Endothelial cell of umbilical vein (primary cell): ENCODE measurements at regions of chr6 and their contacts with region 1.

Region 1: GRCh38 chr6:164106345-164106769 is 691.8 kb downstream of the QKI start:
- DNase-seq: peak; percentile 31
- H3K4me3 ChIP-seq: no peak overlapping the region
- H3K27ac ChIP-seq: no peak overlapping the region
- H3K4me1 ChIP-seq: peaks cover 9% of the 10 kb centered on the region
- H3K27me3 ChIP-seq: no peaks in the 10 kb centered on the region
- CTCF ChIP-seq: peak; percentile 48 to 66
- POLR2A ChIP-seq: no peak

Region 2: GRCh38 chr6:162856885-162857284 is 1249.5 kb before region 1 on chr6:
- CTCF ChIA-PET with region 1: no interaction called
- POLR2A ChIA-PET with region 1: no interaction called
- dilution Hi-C with region 1: no loop called
- intact Hi-C with region 1: loop called (anchors 5 kb)
- DNase-seq: peak; percentile 69
- H3K4me3 ChIP-seq: no peak overlapping the region
- H3K27ac ChIP-seq: no peak overlapping the region
- H3K4me1 ChIP-seq: no peaks in the 10 kb centered on the region
- H3K27me3 ChIP-seq: no peaks in the 10 kb centered on the region
- CTCF ChIP-seq: peak; percentile 19 to 45
- POLR2A ChIP-seq: no peak

Region 3: DNA sequence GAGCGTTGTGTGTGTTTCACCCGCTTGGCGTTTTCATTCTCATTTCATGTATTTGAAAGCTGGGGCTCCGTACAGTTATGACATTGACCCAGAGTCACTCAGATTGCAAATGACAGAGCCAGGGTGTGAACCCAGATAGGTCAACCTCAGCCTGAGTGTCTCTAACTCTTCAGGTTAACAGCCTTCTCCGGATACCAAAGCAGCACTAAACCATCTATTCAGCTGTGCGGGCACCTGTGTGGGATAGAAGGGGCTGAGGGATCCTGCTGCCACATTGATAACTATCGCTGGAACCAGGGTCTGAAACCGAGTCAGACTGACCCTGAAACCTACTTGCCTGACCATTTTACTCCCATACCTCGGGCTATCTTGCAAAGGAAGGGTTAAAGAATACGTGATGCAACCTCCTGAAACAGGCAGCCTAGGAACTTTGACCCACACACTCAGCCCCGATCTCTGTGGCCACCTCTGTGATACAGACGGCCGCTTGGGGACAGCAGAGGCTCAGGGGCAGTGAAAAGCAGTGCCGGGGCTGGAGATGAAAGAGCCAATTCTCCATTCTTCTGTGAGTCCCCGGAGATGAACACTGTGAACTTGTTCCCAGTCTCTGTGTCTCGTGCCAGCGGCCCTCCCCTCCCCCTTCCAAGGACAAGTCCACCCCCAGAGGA is 925.3 kb before region 1 on chr6:
- CTCF ChIA-PET with region 1: interaction called, 6 read pairs
- POLR2A ChIA-PET with region 1: no interaction called
- dilution Hi-C with region 1: no loop called
- intact Hi-C with region 1: loop called (anchors 1 kb)
- DNase-seq: peak; percentile 71
- H3K4me3 ChIP-seq: no peak overlapping the region
- H3K27ac ChIP-seq: no peak overlapping the region
- H3K4me1 ChIP-seq: no peaks in the 10 kb centered on the region
- H3K27me3 ChIP-seq: peaks cover 4 to 9% of the 10 kb centered on the region in 2 experiments
- CTCF ChIP-seq: peak; percentile 93 to 97
- POLR2A ChIP-seq: no peak

Region 4: GRCh38 chr6:163837691-163838431 is 268.5 kb before region 1 on chr6:
- CTCF ChIA-PET with region 1: no interaction called
- POLR2A ChIA-PET with region 1: no interaction called
- dilution Hi-C with region 1: no loop called
- intact Hi-C with region 1: no loop called
- DNase-seq: no peak
- H3K4me3 ChIP-seq: no peak overlapping the region
- H3K27ac ChIP-seq: no peak overlapping the region
- H3K4me1 ChIP-seq: no peaks in the 10 kb centered on the region
- H3K27me3 ChIP-seq: no peaks in the 10 kb centered on the region
- CTCF ChIP-seq: no peak
- POLR2A ChIP-seq: no peak

Region 5: DNA sequence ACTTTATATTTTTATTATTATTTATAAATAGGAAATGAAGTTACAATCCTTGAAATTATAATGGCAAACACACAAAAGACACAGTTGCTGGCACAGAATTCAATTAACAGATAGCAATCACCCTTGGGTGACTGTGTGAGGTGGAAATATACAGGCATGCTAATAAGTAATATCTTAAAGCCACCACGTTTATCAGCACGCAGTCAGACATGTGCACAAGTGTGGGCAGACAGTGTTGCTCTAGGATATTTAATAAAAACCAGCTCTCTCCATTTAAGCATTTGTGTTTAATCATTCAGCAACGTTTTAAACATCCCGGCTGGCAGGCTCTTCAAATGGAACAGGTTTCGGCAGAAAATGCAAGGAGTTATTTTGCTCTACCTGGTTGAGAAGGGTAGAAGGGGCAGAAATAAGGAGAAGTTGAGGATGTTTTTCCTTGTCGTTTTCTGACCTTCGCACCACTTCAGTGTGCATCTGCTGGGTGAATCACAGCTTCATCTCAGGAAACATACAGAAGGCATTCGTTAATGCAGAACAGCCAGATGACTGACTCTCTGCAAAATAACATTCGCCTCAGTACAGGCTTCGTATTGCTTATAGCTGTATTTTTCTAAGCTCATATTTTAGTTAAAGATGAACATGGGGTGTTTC is 106.8 kb before region 1 on chr6:
- CTCF ChIA-PET with region 1: interaction called, 3 read pairs
- POLR2A ChIA-PET with region 1: no interaction called
- dilution Hi-C with region 1: no loop called
- intact Hi-C with region 1: loop called (anchors 5 kb)
- DNase-seq: no peak
- H3K4me3 ChIP-seq: no peak overlapping the region
- H3K27ac ChIP-seq: peak overlapping the region; percentile 37
- H3K4me1 ChIP-seq: peaks cover 27% of the 10 kb centered on the region
- H3K27me3 ChIP-seq: no peaks in the 10 kb centered on the region
- CTCF ChIP-seq: no peak
- POLR2A ChIP-seq: no peak